ENCODE measurements at regions of chr4 and their contacts with region 1.

Region 1: GRCh38 chr4:107824353-107825071 is at the start of gene SGMS2:
- DNase-seq: peak; percentile 90 to 91
- H3K4me3 ChIP-seq: peak within 1 kb of the TSS; percentile 69
- H3K27ac ChIP-seq: peak within 1 kb of the TSS; percentile 96
- H3K4me1 ChIP-seq: peaks cover 25% of the 10 kb centered on the region
- H3K27me3 ChIP-seq: no peaks in the 10 kb centered on the region
- CTCF ChIP-seq: no peak
- total RNA-seq, gene SGMS2: 17.0 and 17.9 TPM in 2 replicates

Region 2: DNA sequence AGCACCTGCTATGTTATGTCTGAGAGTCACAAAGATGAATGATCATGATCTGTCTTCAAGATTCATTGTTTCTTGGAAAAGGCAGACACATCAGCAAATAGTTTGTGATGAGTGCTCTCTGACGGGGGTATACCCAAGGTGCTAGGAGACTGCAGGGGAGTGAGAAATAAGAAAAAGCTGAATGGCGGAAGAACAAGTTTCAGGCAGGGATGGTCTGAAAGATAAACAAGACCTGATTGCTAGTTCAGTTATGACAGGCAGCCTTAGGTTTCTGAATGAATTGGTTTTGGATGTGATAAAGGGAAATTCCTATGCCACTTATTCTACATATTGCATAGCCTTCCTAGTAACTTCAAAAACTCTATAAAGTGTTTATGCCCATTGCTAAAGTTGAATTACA is 461.4 kb before region 1 on chr4:
- CTCF ChIA-PET with region 1: no interaction called
- POLR2A ChIA-PET with region 1: no interaction called
- intact Hi-C with region 1: no loop called
- DNase-seq: no peak
- H3K4me3 ChIP-seq: no peak overlapping the region
- H3K27ac ChIP-seq: no peak overlapping the region
- H3K4me1 ChIP-seq: no peaks in the 10 kb centered on the region
- H3K27me3 ChIP-seq: no peaks in the 10 kb centered on the region
- CTCF ChIP-seq: no peak

Region 3: GRCh38 chr4:107719922-107720722 is 104.4 kb before region 1 on chr4 and contains the start of gene PAPSS1:
- CTCF ChIA-PET with region 1: no interaction called
- POLR2A ChIA-PET with region 1: no interaction called
- intact Hi-C with region 1: loop called (anchors 1 kb)
- DNase-seq: peak; percentile 86 to 93
- H3K4me3 ChIP-seq: peak within 1 kb of the TSS; percentile 82
- H3K27ac ChIP-seq: peak within 1 kb of the TSS; percentile 74
- H3K4me1 ChIP-seq: peaks cover 10% of the 10 kb centered on the region
- H3K27me3 ChIP-seq: no peaks in the 10 kb centered on the region
- CTCF ChIP-seq: no peak
- total RNA-seq, gene PAPSS1: 18.8 and 26.8 TPM in 2 replicates

Region 4: DNA sequence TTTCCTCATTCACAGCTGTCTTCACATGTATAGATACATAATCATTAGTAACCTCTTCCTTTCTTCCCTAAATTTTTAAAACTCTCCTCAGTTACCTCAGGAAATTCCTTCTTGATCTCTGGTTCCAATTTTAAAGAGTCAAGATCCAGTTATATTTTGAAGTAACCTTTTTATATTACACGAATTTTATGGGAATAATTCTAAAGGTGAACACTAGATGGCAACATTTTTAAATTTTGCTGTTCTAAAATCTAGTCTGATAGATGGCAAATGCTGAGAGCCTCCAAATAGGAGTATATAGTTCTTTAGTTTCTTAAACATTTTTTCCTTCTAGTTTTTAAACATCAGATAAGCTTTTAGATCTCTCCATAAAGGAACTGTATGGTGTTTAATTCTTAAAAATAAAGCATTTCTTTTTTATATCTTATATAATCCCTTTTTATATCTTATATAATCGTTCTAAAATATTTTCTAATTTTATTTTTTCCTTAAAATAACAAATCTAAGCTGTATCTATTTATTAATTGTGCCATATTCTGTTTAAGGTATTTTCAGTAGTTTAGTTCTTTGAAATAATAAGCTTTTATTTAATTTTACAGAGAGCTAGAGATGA is 66.5 kb before region 1 on chr4:
- CTCF ChIA-PET with region 1: no interaction called
- POLR2A ChIA-PET with region 1: no interaction called
- intact Hi-C with region 1: loop called (anchors 5 kb)
- DNase-seq: no peak
- H3K4me3 ChIP-seq: no peak overlapping the region
- H3K27ac ChIP-seq: no peak overlapping the region
- H3K4me1 ChIP-seq: no peaks in the 10 kb centered on the region
- H3K27me3 ChIP-seq: no peaks in the 10 kb centered on the region
- CTCF ChIP-seq: peak; percentile 73

Region 5: GRCh38 chr4:107801766-107802211 is 22.7 kb before region 1 on chr4:
- CTCF ChIA-PET with region 1: no interaction called
- POLR2A ChIA-PET with region 1: no interaction called
- intact Hi-C with region 1: no loop called
- DNase-seq: no peak
- H3K4me3 ChIP-seq: no peak overlapping the region
- H3K27ac ChIP-seq: no peak overlapping the region
- H3K4me1 ChIP-seq: no peaks in the 10 kb centered on the region
- H3K27me3 ChIP-seq: no peaks in the 10 kb centered on the region
- CTCF ChIP-seq: no peak

Region 6: DNA sequence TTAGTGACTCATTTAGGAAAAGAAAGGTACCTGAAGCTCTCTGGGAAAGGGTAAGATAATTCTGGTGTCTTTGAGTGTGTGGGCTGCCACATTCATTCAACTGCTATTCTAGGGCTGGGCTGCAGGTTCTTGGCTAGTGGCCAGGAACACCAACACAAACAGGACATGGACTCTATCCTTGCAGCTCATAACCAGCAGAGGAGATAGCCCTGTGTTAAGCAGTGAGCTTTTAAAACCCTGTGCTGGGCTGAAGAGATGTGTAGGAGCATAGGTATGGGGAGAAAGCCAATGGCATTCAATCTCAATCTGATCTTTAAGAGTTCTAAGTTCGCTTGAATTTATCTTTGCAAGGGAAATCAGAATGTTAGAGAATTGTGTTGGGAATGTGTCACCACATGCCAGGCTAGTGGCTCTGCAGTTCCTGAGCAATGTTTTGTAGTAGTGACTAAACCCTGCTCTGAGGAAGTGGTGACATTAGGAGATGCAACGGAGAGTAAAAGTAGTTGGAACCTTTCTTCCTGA is 39.4 kb after region 1 on chr4:
- CTCF ChIA-PET with region 1: no interaction called
- POLR2A ChIA-PET with region 1: no interaction called
- intact Hi-C with region 1: loop called (anchors 1 kb)
- DNase-seq: peak; percentile 48 to 50
- H3K4me3 ChIP-seq: no peak overlapping the region
- H3K27ac ChIP-seq: peak overlapping the region; percentile 32
- H3K4me1 ChIP-seq: peaks cover 21% of the 10 kb centered on the region
- H3K27me3 ChIP-seq: no peaks in the 10 kb centered on the region
- CTCF ChIP-seq: no peak

Region 7: GRCh38 chr4:107896158-107897045 is 71.9 kb after region 1 on chr4:
- CTCF ChIA-PET with region 1: no interaction called
- POLR2A ChIA-PET with region 1: interaction called, 5 read pairs
- intact Hi-C with region 1: loop called (anchors 1 kb)
- DNase-seq: peak; percentile 44 to 97
- H3K4me3 ChIP-seq: peak overlapping the region; percentile 20; the same call in 1 of the 2 replicates
- H3K27ac ChIP-seq: peak overlapping the region; percentile 87
- H3K4me1 ChIP-seq: peaks cover 26% of the 10 kb centered on the region
- H3K27me3 ChIP-seq: no peaks in the 10 kb centered on the region
- CTCF ChIP-seq: no peak

Region 8: DNA sequence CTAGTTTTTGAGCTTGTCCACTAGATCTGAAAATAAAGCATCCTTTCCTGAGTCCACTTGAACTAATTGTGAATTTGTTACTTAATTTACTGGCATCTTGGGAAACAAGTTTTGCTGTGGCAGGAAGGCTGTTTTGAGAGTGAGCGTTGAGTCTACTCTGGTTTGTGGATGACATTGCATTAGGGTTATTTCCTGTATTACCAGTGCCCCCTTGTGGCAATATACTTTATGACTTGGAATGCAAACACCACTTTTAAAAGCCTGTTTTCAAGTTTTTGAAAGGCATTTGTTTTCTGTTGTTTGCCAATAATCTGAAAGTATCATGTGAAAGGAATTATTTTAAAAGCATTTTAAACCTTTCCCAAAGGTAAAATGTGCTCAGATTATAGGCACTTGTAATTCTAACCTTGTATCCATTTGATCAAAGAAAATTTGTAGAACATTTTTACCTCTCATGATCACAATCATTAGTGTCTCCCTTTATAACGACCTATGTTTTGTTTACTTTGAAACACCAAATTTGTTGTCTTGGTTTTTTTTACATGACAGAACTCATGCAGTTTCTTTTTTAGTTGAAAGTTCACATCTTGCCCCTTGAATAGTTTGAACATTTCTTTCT is 88.9 kb after region 1 on chr4:
- CTCF ChIA-PET with region 1: no interaction called
- POLR2A ChIA-PET with region 1: interaction called, 4 read pairs
- intact Hi-C with region 1: loop called (anchors 1 kb)
- DNase-seq: peak; percentile 11 to 47
- H3K4me3 ChIP-seq: no peak overlapping the region
- H3K27ac ChIP-seq: no peak overlapping the region
- H3K4me1 ChIP-seq: peaks cover 5% of the 10 kb centered on the region; the same call in 1 of the 2 replicates
- H3K27me3 ChIP-seq: no peaks in the 10 kb centered on the region
- CTCF ChIP-seq: peak; percentile 80

Region 9: DNA sequence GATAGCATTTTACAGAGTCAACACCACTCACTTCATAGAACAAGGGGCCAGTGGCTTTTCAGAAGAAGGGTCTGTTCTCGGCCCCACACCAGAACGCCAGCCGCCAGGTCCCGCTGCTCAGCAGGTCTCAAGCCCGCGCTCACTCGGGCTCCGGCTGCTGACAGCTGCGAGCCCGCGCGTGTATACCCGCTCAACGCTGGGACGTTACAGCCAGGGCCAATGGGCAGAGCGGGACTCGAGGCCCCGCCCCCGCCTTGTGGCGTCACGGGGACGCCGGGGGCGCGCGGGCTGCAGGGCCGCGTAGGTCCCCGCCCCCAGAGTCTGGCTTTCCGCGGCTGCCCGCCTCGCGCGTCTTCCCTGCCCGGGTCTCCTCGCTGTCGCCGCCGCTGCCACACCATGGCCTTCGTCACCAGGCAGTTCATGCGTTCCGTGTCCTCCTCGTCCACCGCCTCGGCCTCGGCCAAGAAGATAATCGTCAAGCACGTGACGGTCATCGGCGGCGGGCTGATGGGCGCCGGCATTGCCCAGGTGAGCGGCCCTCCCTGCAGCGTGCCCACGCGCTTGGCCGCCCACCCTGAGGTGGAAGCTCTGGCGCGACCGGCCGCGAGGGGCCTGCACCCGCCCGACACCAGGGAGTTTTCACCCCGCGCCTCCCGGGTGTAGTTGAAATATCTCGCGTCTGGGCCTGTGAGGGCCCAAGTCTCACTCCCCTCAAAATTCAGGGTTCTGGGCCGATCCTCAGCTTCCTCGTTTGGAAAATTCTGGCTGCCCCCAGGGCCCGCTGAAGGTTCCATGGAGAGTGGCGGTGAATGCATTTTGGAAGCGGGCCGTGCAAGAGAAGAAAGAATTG is 165.2 kb after region 1 on chr4 and contains the start of gene HADH:
- CTCF ChIA-PET with region 1: no interaction called
- POLR2A ChIA-PET with region 1: no interaction called
- intact Hi-C with region 1: loop called (anchors 2 kb)
- DNase-seq: peak; percentile 73 to 85
- H3K4me3 ChIP-seq: peak within 1 kb of the TSS; percentile 82
- H3K27ac ChIP-seq: peak within 1 kb of the TSS; percentile 35; the same call in 1 of the 2 replicates
- H3K4me1 ChIP-seq: peaks cover 15% of the 10 kb centered on the region; the same call in 1 of the 2 replicates
- H3K27me3 ChIP-seq: no peaks in the 10 kb centered on the region
- CTCF ChIP-seq: no peak
- total RNA-seq, gene HADH: 36.8 and 45.0 TPM in 2 replicates

Measured in PC-9 (cell line).